MCF 10A (cell line): ENCODE measurements at regions of chr12 and their contacts with region 1.

Region 1: DNA sequence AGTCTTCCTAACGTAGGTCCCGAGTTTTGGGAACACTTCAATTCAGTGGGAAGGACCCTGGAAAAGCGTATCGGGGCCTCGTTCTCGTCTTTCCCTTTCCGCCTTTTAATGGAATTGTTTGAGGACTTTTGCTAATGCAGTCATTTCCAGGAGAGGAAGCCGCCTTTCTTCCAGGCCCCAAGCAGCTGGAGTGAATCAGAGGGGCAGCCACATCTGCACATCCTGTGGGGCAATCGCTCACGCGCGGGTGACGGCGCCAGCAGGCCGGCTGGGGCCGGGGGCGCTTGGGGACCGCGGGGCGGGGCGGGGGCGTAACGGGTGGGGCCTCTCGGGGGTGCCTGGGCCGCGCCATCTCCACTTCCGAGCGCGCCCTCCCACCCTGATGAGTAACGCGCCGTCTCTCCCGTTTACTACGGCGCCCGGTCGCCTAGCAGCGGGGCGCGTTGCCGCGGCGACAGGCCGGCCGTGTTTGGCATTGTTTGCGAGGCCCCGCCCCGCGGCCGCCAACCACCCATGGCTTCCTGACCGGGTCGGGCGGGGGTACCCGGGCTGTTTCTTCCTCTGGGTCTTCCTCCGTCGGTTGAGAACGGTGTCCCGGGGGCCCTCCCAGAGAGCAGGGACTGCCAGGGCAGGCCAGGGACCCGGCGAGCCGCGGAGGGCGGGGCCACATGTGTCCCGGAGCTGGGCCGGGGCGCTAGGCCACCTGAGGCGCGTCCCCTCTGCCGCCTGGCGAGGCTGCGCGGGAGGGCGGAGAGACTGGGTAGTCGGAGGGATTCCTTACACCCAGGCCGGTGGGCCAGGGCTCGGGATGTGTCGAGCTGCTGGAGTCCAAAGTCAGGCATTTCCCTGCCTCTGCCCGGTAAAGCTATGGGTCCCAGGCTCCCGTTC is 2.3 kb downstream of the GSG1 start:
- DNase-seq: peak; percentile 90
- H3K4me3 Mint-ChIP-seq: peak overlapping the region; percentile 38
- H3K27ac Mint-ChIP-seq: peak overlapping the region; percentile 99
- H3K4me1 Mint-ChIP-seq: peaks cover 62% of the 10 kb centered on the region
- H3K27me3 Mint-ChIP-seq: no peaks in the 10 kb centered on the region
- CTCF ChIP-seq: no peak

Region 2: DNA sequence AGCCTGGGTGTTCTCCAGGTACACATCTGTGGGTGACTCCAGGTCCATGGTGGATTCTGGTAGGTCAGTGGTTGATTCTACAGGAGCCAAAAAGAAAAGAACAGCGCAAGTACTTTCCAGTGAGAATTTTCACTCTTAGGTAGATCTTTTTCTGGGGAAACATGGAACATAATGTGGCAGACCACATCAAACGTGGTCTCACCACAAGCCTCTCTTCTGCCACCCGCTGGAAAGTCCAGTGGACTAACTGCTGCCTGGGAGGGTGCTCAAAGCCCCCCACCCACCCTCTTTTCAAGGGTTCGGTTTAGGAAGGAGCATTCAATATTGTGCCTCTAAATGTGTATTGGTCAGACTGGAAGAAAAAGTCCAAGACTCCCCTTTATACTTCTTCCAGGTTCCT is 1669.6 kb before region 1 on chr12:
- CTCF ChIA-PET with region 1: no interaction called
- POLR2A ChIA-PET with region 1: no interaction called
- intact Hi-C with region 1: no loop called
- DNase-seq: no peak
- H3K4me3 Mint-ChIP-seq: no peak overlapping the region
- H3K27ac Mint-ChIP-seq: no peak overlapping the region
- H3K4me1 Mint-ChIP-seq: no peaks in the 10 kb centered on the region
- H3K27me3 Mint-ChIP-seq: peaks cover 51% of the 10 kb centered on the region
- CTCF ChIP-seq: no peak

Region 3: GRCh38 chr12:13044002-13044905 is 56.9 kb before region 1 on chr12 and contains the start of gene FAM234B:
- CTCF ChIA-PET with region 1: interaction called, 3 read pairs
- POLR2A ChIA-PET with region 1: interaction called, 4 read pairs
- intact Hi-C with region 1: loop called (anchors 5 kb)
- DNase-seq: peak; percentile 66
- H3K4me3 Mint-ChIP-seq: peak within 1 kb of the TSS; percentile 85
- H3K27ac Mint-ChIP-seq: peak within 1 kb of the TSS; percentile 82
- H3K4me1 Mint-ChIP-seq: peaks cover 10% of the 10 kb centered on the region
- H3K27me3 Mint-ChIP-seq: no peaks in the 10 kb centered on the region
- CTCF ChIP-seq: peak; percentile 12
- total RNA-seq, gene FAM234B: 5.4 and 5.7 TPM in 2 replicates

Region 4: GRCh38 chr12:13154027-13154538 is 53.0 kb after region 1 on chr12:
- CTCF ChIA-PET with region 1: interaction called, 6 read pairs
- POLR2A ChIA-PET with region 1: interaction called, 15 read pairs
- intact Hi-C with region 1: no loop called
- DNase-seq: peak; percentile 47
- H3K4me3 Mint-ChIP-seq: peak overlapping the region; percentile 44
- H3K27ac Mint-ChIP-seq: peak overlapping the region; percentile 55
- H3K4me1 Mint-ChIP-seq: peaks cover 17% of the 10 kb centered on the region
- H3K27me3 Mint-ChIP-seq: no peaks in the 10 kb centered on the region
- CTCF ChIP-seq: no peak

Region 5: GRCh38 chr12:13173012-13173932 is 72.1 kb after region 1 on chr12:
- CTCF ChIA-PET with region 1: interaction called, 9 read pairs
- POLR2A ChIA-PET with region 1: interaction called, 205 read pairs
- intact Hi-C with region 1: loop called (anchors 2 kb)
- DNase-seq: peak; percentile 80
- H3K4me3 Mint-ChIP-seq: peak overlapping the region; percentile 53
- H3K27ac Mint-ChIP-seq: peak overlapping the region; percentile 90
- H3K4me1 Mint-ChIP-seq: peaks cover 52% of the 10 kb centered on the region
- H3K27me3 Mint-ChIP-seq: no peaks in the 10 kb centered on the region
- CTCF ChIP-seq: no peak

Region 6: DNA sequence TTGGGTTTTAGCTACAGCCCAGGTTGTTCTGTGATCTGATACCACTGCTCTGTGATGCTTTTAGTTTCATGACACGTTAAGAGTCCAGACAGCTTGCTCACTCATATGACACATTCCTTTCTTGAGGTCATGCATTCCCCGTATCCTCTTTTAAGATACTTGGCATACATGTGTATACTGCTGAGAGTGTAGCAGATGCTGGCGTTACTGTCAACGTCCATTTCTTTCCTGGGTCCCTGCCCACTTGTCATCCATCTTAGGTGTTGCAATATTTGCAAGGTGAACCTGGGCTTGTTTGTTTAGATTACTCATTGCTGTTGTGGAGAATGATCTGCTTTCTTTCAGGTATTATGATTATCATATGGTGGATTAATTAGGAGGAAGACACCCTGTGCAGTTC is 86.3 kb after region 1 on chr12:
- CTCF ChIA-PET with region 1: interaction called, 5 read pairs
- POLR2A ChIA-PET with region 1: interaction called, 31 read pairs
- intact Hi-C with region 1: no loop called
- DNase-seq: peak; percentile 73
- H3K4me3 Mint-ChIP-seq: no peak overlapping the region
- H3K27ac Mint-ChIP-seq: peak overlapping the region; percentile 52
- H3K4me1 Mint-ChIP-seq: peaks cover 27% of the 10 kb centered on the region
- H3K27me3 Mint-ChIP-seq: no peaks in the 10 kb centered on the region
- CTCF ChIP-seq: no peak

Region 7: DNA sequence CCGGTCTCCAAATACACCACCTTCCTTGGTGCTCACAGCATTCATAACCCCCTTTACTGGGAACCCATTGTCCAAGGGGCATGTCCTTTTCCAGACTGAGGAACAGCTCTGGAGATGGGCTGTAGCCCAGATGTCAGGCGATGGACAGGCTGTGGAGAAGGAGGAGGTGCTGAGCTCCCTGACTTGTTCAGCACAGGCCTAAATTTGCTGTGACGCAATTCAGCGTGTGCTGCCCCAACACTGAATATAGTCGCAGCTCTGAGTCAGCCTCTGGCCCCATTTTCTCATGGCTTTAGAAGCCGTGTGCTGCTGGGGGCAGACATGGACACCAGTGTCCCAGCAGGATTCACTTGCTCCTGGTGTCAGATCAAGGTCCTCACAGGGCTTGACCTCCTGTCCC is 364.5 kb after region 1 on chr12:
- CTCF ChIA-PET with region 1: no interaction called
- POLR2A ChIA-PET with region 1: no interaction called
- intact Hi-C with region 1: no loop called
- DNase-seq: peak; percentile 54
- H3K4me3 Mint-ChIP-seq: no peak overlapping the region
- H3K27ac Mint-ChIP-seq: no peak overlapping the region
- H3K4me1 Mint-ChIP-seq: no peaks in the 10 kb centered on the region
- H3K27me3 Mint-ChIP-seq: peaks cover 45% of the 10 kb centered on the region
- CTCF ChIP-seq: no peak

Region 8: DNA sequence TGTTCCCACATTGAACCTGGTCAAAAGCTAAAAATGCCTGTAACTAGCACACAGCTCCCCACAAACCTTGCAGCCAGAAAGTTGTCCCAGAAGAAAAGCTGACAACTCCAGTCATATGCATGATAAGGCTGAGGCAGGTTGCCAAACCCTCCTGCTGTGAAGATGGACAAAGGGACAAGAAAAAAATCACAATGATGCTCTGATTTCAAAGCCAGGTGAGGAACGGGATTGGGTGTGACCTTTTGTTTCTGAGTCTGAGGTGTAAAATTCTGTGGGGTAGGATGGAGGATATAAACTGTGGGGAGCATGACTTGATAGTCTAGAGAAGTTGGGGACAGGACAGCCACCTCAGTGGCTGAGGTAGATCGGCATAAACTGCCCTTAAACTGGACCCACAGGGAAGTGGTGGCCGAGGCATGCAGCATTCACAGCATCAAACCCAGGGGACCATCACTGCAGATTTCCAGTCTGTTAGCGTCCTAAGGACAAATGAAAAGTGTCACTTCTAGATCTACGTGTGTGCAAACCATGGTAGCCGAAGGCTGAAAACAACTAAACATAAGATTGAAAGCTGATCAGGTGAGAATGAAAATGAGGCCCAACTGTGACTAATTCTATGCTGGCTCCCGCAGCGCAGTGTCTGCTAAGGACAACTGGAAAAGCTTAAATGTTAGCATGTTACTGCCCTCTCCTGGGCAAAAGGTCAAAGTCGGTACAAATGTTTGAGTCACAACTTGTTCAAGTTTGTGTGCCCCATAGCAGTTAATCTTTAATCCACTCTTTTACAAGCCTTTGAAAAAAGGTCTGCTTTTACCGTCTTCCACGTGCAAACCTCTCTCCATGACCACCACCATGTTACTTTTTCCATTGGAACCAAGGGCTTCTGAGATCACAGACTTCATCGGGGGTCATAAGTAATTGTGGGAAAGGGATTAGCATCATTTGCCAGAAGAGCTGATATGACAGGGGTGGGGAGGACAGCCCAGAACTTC is 840.4 kb after region 1 on chr12:
- CTCF ChIA-PET with region 1: no interaction called
- POLR2A ChIA-PET with region 1: no interaction called
- intact Hi-C with region 1: loop called (anchors 5 kb)
- DNase-seq: peak; percentile 80
- H3K4me3 Mint-ChIP-seq: no peak overlapping the region
- H3K27ac Mint-ChIP-seq: no peak overlapping the region
- H3K4me1 Mint-ChIP-seq: no peaks in the 10 kb centered on the region
- H3K27me3 Mint-ChIP-seq: no peaks in the 10 kb centered on the region
- CTCF ChIP-seq: peak; percentile 41